Activated naive CD4-positive, alpha-beta T cell treated with anti-CD3 and anti-CD28 coated beads for 36 hours (primary cell): ENCODE measurements at regions of chr17 and their contacts with region 1.

Region 1: GRCh38 chr17:79728226-79728907 is 2.4 kb upstream of the ENPP7 start:
- DNase-seq: peak; percentile 93
- H3K4me3 Mint-ChIP-seq: peak overlapping the region; percentile 69
- H3K27ac Mint-ChIP-seq: peak overlapping the region; percentile 77
- H3K4me1 Mint-ChIP-seq: peaks cover 11% of the 10 kb centered on the region
- H3K27me3 Mint-ChIP-seq: no peaks in the 10 kb centered on the region

Region 2: GRCh38 chr17:79741751-79742588 is 13.6 kb after region 1 on chr17:
- CTCF ChIA-PET with region 1: interaction called, 12 read pairs
- intact Hi-C with region 1: no loop called
- DNase-seq: peak; percentile 78
- H3K4me3 Mint-ChIP-seq: no peak overlapping the region
- H3K27ac Mint-ChIP-seq: no peak overlapping the region
- H3K4me1 Mint-ChIP-seq: peaks cover 12% of the 10 kb centered on the region
- H3K27me3 Mint-ChIP-seq: peaks cover 27% of the 10 kb centered on the region